Left colon (tissue), 2 donors: ENCODE measurements at regions of chr17 and their contacts with region 1.

Region 1: GRCh38 chr17:2416010-2416734 is 15.3 kb upstream of the MNT start:
- DNase-seq: peak; percentile 73 to 91
- ATAC-seq: peak; percentile 82

Region 2: GRCh38 chr17:1658100-1658499 is 758.1 kb before region 1 on chr17:
- intact Hi-C with region 1: no loop called
- DNase-seq: no peak
- ATAC-seq: no peak

Region 3: GRCh38 chr17:2380226-2380922 is 35.8 kb before region 1 on chr17:
- intact Hi-C with region 1: loop called (anchors 2 to 5 kb)
- DNase-seq: no peak
- ATAC-seq: no peak